AG04450 (cell line): ENCODE measurements at regions of chr4 and their contacts with region 1.

Region 1: GRCh38 chr4:25767877-25768725 is 94.7 kb downstream of the SEL1L3 start:
- DNase-seq: peak; percentile 32
- H3K4me3 ChIP-seq: no peak overlapping the region
- H3K27ac ChIP-seq: no peak overlapping the region
- H3K27me3 ChIP-seq: no peaks in the 10 kb centered on the region
- CTCF ChIP-seq: peak; percentile 99

Region 2: GRCh38 chr4:25144870-25145481 is 623.1 kb before region 1 on chr4:
- CTCF ChIA-PET with region 1: no interaction called
- POLR2A ChIA-PET with region 1: no interaction called
- DNase-seq: no peak
- H3K4me3 ChIP-seq: no peak overlapping the region
- H3K27ac ChIP-seq: no peak overlapping the region
- H3K27me3 ChIP-seq: no peaks in the 10 kb centered on the region
- CTCF ChIP-seq: peak; percentile 75

Region 3: DNA sequence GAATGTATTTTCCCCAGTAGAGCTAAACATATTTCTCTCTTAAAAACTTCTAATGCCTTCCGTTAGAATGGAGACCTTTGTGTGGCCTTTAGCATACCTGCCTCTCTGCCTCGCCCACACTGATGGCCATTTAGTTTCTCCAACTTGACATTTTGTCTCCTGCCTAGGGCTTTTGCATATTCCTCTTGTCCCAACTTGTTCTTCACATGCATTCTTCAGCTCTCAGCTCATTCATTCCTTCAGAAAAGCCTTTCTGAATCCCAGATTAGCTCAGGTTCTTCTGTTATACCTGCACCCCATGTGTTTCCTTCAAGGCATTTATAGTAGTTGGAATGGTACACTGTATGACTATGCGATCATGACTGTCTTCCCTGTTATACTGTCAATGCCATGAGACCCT is 372.2 kb before region 1 on chr4:
- CTCF ChIA-PET with region 1: interaction called, 13 read pairs
- POLR2A ChIA-PET with region 1: no interaction called
- DNase-seq: no peak
- H3K4me3 ChIP-seq: no peak overlapping the region
- H3K27ac ChIP-seq: no peak overlapping the region
- H3K27me3 ChIP-seq: no peaks in the 10 kb centered on the region
- CTCF ChIP-seq: no peak

Region 4: DNA sequence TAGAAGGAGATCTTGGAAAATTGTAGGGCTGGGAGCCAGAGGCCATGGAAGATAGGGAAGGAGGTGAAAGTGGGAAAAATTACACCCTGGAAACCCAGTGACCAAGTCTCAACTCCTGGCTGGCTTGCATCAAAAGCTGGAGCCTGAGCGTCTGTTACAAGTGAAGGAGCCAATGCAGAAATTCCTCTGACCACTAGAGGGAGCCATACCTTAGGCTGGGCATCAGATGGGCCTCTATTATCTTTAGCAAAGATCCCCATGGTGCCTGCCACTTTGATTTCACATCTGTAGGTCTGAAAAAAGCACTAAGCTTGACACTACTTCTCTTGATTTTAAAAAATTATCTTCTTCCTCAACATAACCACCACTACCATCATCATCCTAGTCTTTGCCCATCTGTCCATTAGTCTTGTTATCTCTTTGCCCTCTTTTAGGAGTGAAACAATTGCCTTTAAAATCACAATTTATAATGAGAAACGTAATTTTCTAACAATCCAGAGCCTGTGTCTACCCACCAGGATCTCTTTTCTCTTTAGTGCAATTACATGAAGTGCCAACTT is 328.1 kb before region 1 on chr4:
- CTCF ChIA-PET with region 1: interaction called, 302 read pairs
- POLR2A ChIA-PET with region 1: no interaction called
- DNase-seq: peak; percentile 33
- H3K4me3 ChIP-seq: no peak overlapping the region
- H3K27ac ChIP-seq: no peak overlapping the region
- H3K27me3 ChIP-seq: peaks cover 2% of the 10 kb centered on the region
- CTCF ChIP-seq: peak; percentile 95

Region 5: DNA sequence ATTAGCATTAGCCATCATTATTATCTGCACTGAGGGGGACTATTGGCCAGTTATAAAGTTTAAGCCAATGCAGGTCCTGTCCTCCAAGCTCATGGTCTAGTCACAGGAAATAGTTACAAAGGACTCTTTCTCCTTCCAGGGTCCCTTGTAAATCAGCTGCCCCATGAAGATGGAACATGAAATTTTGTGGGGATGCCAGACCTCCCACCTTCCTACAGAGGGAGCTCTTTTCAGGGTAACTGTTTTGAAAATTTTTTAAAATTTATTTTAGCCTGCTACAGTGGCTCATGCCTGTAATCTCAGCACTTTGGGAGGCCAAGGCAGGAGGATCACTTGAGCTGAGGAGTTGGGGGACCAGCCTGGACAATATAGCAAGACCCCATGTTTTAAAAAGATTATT is 236.8 kb before region 1 on chr4:
- CTCF ChIA-PET with region 1: interaction called, 10 read pairs
- POLR2A ChIA-PET with region 1: no interaction called
- DNase-seq: no peak
- H3K4me3 ChIP-seq: no peak overlapping the region
- H3K27ac ChIP-seq: no peak overlapping the region
- H3K27me3 ChIP-seq: no peaks in the 10 kb centered on the region
- CTCF ChIP-seq: peak; percentile 35; the same call in 1 of the 2 replicates

Region 6: GRCh38 chr4:25697516-25697915 is 70.6 kb before region 1 on chr4:
- CTCF ChIA-PET with region 1: no interaction called
- POLR2A ChIA-PET with region 1: no interaction called
- DNase-seq: no peak
- H3K4me3 ChIP-seq: no peak overlapping the region
- H3K27ac ChIP-seq: no peak overlapping the region
- H3K27me3 ChIP-seq: peaks cover 3% of the 10 kb centered on the region
- CTCF ChIP-seq: no peak

Region 7: GRCh38 chr4:25779016-25779415 is 10.9 kb after region 1 on chr4:
- CTCF ChIA-PET with region 1: interaction called, 22 read pairs
- POLR2A ChIA-PET with region 1: no interaction called
- DNase-seq: no peak
- H3K4me3 ChIP-seq: no peak overlapping the region
- H3K27ac ChIP-seq: no peak overlapping the region
- H3K27me3 ChIP-seq: no peaks in the 10 kb centered on the region
- CTCF ChIP-seq: no peak